PC-9 (cell line): ENCODE measurements at regions of chr5 and their contacts with region 1.

Region 1: GRCh38 chr5:173615884-173616576 is 420 bp downstream of the BOD1 start:
- DNase-seq: peak; percentile 67 to 72
- H3K4me3 ChIP-seq: peak overlapping the region; percentile 98
- H3K27ac ChIP-seq: peak overlapping the region; percentile 84
- H3K4me1 ChIP-seq: peaks cover 31% of the 10 kb centered on the region
- H3K27me3 ChIP-seq: no peaks in the 10 kb centered on the region
- CTCF ChIP-seq: peak; percentile 70

Region 2: GRCh38 chr5:172984243-172984953 is 631.6 kb before region 1 on chr5:
- CTCF ChIA-PET with region 1: interaction called, 6 read pairs
- POLR2A ChIA-PET with region 1: no interaction called
- intact Hi-C with region 1: loop called (anchors 5 kb)
- DNase-seq: peak; percentile 63 to 79
- H3K4me3 ChIP-seq: peak overlapping the region; percentile 87
- H3K27ac ChIP-seq: peak overlapping the region; percentile 77
- H3K4me1 ChIP-seq: peaks cover 13% of the 10 kb centered on the region; the same call in 1 of the 2 replicates
- H3K27me3 ChIP-seq: no peaks in the 10 kb centered on the region
- CTCF ChIP-seq: peak; percentile 65

Region 3: DNA sequence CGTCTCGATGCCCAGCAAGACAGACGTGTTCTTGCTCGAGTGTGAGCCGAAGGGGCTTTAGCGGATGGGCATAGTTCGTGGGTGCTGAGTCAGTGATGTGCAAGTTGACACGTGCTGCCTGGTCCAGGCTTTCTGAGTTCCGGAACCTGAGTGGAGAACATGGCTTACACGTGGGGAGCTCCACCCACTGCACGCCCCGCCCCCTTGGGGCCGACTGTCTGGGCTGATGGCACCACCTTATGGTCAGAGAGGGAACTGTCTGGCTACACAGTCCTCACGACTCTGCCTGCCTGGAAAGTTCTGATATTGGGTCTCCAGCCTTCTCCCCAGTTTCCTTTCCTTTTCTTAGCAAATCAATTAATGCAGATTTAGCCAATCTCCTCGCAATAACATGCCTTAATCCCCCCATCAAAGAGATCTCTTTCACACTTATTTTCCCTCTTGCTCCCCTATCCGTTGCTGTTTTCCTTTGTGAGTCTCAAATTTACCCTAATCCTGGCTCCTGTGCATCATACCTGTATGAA is 284.0 kb before region 1 on chr5:
- CTCF ChIA-PET with region 1: interaction called, 15 read pairs
- POLR2A ChIA-PET with region 1: no interaction called
- intact Hi-C with region 1: loop called (anchors 10 kb)
- DNase-seq: peak; percentile 55 to 57
- H3K4me3 ChIP-seq: no peak overlapping the region
- H3K27ac ChIP-seq: peak overlapping the region; percentile 100; the same call in 1 of the 2 replicates
- H3K4me1 ChIP-seq: peaks cover 64% of the 10 kb centered on the region
- H3K27me3 ChIP-seq: no peaks in the 10 kb centered on the region
- CTCF ChIP-seq: peak; percentile 72

Region 4: DNA sequence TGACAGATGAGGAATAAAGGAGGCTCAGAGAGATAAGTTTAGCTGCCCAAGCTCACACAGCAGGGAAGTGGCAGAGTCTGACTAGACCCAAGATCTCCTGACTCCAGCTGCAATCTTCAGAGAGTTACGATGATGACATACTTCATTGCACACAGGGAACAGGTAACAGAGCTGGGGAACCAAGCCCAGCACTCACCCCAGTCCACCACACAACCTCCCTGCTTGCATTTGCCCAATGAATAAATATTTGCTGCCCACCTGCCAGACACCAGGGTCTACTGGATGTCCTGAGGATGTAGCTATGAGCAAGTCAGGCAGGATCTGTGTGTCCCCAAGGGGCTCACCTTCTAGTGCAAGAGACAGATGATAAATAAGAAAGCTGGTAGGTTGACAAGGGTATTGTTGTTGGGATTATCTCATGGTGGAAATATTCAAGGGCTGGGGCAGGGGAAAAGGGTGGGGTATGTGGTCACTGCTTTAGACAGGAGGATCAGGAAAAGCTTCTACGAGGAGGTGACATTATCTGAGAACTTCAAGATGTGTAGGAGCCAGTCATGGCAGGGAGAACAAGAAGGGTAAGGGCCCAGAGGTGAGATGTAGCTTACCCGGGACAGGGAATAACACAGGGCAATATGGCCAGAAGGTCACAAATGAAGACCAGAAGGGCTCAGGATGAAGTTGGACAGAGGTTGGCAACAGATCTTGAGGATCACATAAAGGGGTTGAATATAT is 243.6 kb after region 1 on chr5:
- CTCF ChIA-PET with region 1: no interaction called
- POLR2A ChIA-PET with region 1: interaction called, 11 read pairs
- intact Hi-C with region 1: no loop called
- DNase-seq: peak; percentile 73 to 83
- H3K4me3 ChIP-seq: no peak overlapping the region
- H3K27ac ChIP-seq: peak overlapping the region; percentile 54
- H3K4me1 ChIP-seq: peaks cover 50% of the 10 kb centered on the region
- H3K27me3 ChIP-seq: no peaks in the 10 kb centered on the region
- CTCF ChIP-seq: no peak

Region 5: GRCh38 chr5:173925448-173926071 is 309.5 kb after region 1 on chr5:
- CTCF ChIA-PET with region 1: interaction called, 9 read pairs
- POLR2A ChIA-PET with region 1: no interaction called
- intact Hi-C with region 1: loop called (anchors 1 kb)
- DNase-seq: peak in 1 of 2 experiments; percentile 47
- H3K4me3 ChIP-seq: no peak overlapping the region
- H3K27ac ChIP-seq: no peak overlapping the region
- H3K4me1 ChIP-seq: peaks cover 7% of the 10 kb centered on the region
- H3K27me3 ChIP-seq: no peaks in the 10 kb centered on the region
- CTCF ChIP-seq: peak; percentile 68

Region 6: DNA sequence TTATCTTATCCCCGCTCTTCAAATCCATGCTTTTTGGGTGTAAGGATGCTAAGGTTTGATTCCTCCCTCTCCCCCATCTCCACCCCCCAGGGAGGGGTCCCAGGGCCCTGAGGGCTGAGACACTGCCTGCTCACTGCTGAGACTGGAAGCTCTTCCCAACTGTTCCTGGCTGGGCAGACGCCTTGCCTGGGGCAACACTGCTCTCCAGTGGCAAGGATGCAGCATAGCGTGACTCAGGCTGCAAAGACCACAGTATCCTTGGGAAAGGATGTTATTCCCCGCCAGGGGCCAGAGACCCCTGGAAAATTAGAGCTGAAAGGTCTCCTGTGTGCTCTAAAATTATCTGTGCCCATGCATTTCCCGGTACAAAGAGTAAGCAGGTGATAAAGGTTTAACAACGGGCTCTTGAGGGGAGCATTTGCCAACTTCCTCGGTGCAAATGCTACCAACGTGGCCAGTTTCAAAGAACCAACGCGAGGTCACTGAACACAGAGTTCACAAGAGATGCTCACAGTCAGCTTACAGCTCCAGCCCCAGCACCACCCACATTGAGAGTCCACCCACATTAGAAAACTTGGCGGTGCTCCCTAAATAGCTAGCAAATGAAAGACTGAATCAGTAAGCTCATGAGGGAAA is 701.3 kb after region 1 on chr5:
- CTCF ChIA-PET with region 1: no interaction called
- POLR2A ChIA-PET with region 1: no interaction called
- intact Hi-C with region 1: loop called (anchors 1 kb)
- DNase-seq: peak in 1 of 2 experiments; percentile 48
- H3K4me3 ChIP-seq: no peak overlapping the region
- H3K27ac ChIP-seq: no peak overlapping the region
- H3K4me1 ChIP-seq: no peaks in the 10 kb centered on the region
- H3K27me3 ChIP-seq: peaks cover 77% of the 10 kb centered on the region
- CTCF ChIP-seq: peak; percentile 78